ENCODE measurements at regions of chr6 and their contacts with region 1.

Region 1: DNA sequence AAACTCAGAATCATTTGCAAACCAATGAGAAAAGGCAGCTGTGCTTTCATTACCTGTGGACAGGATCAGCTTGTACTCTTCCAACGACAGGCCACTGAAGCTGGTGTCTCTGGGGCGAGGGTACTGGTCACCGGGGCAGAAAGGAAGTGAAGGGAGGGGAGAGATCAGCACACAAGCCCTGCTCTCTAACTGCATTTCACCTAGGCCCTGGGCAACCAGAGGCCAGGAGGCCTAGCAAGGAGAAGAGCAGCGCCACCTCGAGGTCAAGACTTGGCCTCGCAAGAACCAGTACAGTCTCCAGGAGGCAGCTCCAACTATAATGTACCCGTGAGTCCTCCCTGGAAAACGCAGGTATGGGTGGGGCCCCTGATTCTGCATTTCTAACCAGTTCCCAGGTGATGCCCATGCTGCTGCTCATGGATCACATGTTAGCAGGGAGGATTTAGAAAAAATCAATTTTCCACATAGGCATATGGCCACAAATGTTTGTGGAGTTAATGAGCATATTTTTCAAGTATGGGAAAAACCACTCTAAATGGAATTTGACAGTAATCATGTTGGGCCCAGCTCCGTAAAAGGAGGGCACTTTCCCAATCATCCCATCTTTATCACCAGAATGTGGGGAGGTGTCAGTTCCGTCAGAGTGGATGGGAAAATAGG is 11.0 kb downstream of the UQCC2 start:
- DNase-seq: peak; percentile 80
- H3K4me3 ChIP-seq: no peak overlapping the region
- H3K27ac ChIP-seq: no peak overlapping the region
- H3K4me1 ChIP-seq: no peaks in the 10 kb centered on the region
- H3K27me3 ChIP-seq: no peaks in the 10 kb centered on the region
- CTCF ChIP-seq: peak; percentile 65

Region 2: DNA sequence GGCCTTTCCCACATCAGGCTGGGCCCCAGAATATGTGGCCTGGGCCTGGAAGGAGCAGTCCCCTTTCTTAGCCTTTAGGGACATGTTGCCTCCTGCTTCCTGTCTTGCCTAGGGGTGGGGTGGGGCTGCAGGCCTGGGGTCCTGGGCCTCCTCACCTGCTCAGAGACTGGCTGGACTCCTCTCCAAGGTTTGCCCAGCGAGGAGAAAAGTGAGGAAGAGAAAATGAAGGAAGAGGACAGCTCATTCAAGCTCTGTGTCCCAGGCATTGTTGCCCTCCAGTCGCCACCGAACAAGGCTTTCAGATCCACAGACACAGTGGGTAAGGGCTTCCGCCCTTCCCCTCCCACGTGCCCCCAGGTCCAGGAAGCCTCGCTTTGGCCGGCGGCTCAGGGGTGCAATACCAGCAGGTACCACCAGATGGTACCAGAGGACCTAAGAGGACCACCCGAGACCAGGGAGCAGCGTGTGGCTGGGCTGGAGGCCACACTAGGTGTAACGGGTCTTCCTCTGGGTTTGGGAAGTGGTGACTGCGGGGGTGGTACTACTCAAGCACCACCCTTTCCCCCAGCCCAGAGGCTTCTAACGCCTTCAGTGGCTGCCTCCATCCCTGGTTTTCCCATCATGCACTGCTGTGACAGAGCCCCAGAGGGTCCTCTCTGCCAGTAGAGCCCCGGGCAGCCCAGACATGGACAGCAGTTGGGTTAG is 115.0 kb before region 1 on chr6:
- intact Hi-C with region 1: loop called (anchors 2 kb)
- DNase-seq: peak; percentile 89
- H3K4me3 ChIP-seq: no peak overlapping the region
- H3K27ac ChIP-seq: no peak overlapping the region
- H3K4me1 ChIP-seq: peaks cover 12% of the 10 kb centered on the region
- H3K27me3 ChIP-seq: no peaks in the 10 kb centered on the region
- CTCF ChIP-seq: peak; percentile 92

Region 3: GRCh38 chr6:33950472-33950881 is 250.0 kb after region 1 on chr6:
- intact Hi-C with region 1: no loop called
- DNase-seq: peak; percentile 71
- H3K4me3 ChIP-seq: no peak overlapping the region
- H3K27ac ChIP-seq: no peak overlapping the region
- H3K4me1 ChIP-seq: no peaks in the 10 kb centered on the region
- H3K27me3 ChIP-seq: no peaks in the 10 kb centered on the region
- CTCF ChIP-seq: no peak

Measured in colonic mucosa (tissue), 4 donors.